ENCODE measurements at regions of chr1 and their contacts with region 1.

Region 1: GRCh38 chr1:1122078-1122811 is 6.4 kb upstream of the C1orf159 start:
- DNase-seq: peak; percentile 71 to 90 (median 82)
- ATAC-seq: peak; percentile 99
- H3K4me3 ChIP-seq: peak overlapping the region; percentile 48
- H3K4me3 Mint-ChIP-seq: no peak overlapping the region
- H3K27ac ChIP-seq: no peak overlapping the region
- H3K27ac Mint-ChIP-seq: no peak overlapping the region
- H3K4me1 ChIP-seq: peaks cover 20% of the 10 kb centered on the region
- H3K4me1 Mint-ChIP-seq: no peaks in the 10 kb centered on the region
- H3K27me3 ChIP-seq: peaks cover 0 to 2% of the 10 kb centered on the region in 2 experiments
- H3K27me3 Mint-ChIP-seq: no peaks in the 10 kb centered on the region
- CTCF ChIP-seq: peak; percentile 91

Region 2: GRCh38 chr1:1137256-1138045 is 15.2 kb after region 1 on chr1:
- CTCF ChIA-PET with region 1: no interaction called
- POLR2A ChIA-PET with region 1: no interaction called
- intact Hi-C with region 1: no loop called
- DNase-seq: peak; percentile 50 to 90 (median 62)
- ATAC-seq: peak; percentile 83
- H3K4me3 ChIP-seq: peak overlapping the region; percentile 30
- H3K4me3 Mint-ChIP-seq: peak overlapping the region; percentile 83
- H3K27ac ChIP-seq: peak overlapping the region in 1 of 2 donors; percentile 15
- H3K27ac Mint-ChIP-seq: peak overlapping the region; percentile 71
- H3K4me1 ChIP-seq: peaks cover 37% of the 10 kb centered on the region
- H3K4me1 Mint-ChIP-seq: peaks cover 13% of the 10 kb centered on the region
- H3K27me3 ChIP-seq: no peaks in the 10 kb centered on the region
- H3K27me3 Mint-ChIP-seq: no peaks in the 10 kb centered on the region
- CTCF ChIP-seq: no peak

Region 3: GRCh38 chr1:1157426-1157913 is 35.2 kb after region 1 on chr1:
- CTCF ChIA-PET with region 1: no interaction called
- POLR2A ChIA-PET with region 1: no interaction called
- intact Hi-C with region 1: loop called in 1 of 2 experiments (anchors 2 kb)
- DNase-seq: peak; percentile 35 to 80 (median 53)
- ATAC-seq: peak; percentile 75
- H3K4me3 ChIP-seq: peak overlapping the region; percentile 87
- H3K4me3 Mint-ChIP-seq: peak overlapping the region; percentile 83
- H3K27ac ChIP-seq: peak overlapping the region; percentile 77 to 82
- H3K27ac Mint-ChIP-seq: peak overlapping the region; percentile 75
- H3K4me1 ChIP-seq: peaks cover 19% of the 10 kb centered on the region
- H3K4me1 Mint-ChIP-seq: no peaks in the 10 kb centered on the region
- H3K27me3 ChIP-seq: no peaks in the 10 kb centered on the region
- H3K27me3 Mint-ChIP-seq: no peaks in the 10 kb centered on the region
- CTCF ChIP-seq: no peak

Region 4: DNA sequence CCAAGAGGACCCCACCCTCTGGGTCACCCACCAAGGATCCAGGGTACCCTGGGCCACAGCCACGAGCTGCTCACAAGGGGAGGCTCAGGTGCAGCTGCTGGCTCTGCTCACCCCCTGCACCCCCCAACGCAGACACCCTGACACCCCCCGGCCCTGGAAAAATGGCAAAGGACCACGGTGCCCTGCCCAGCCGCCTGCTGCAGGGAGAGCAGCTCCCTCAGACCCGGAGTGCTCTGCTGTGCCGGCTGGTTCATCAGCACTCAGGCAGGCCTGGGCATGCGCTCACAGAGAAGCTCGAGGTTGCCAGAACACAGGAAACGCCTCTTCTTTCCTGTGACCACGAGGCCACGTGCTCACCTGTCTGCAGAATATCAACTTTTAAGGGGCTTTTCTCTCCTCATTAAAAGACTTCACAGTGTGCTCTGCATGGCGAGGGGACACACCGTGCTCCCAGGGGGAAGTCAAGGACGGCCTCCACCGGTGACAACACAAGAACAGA is 128.6 kb after region 1 on chr1:
- CTCF ChIA-PET with region 1: interaction called, 9 read pairs
- POLR2A ChIA-PET with region 1: interaction called, 3 read pairs
- intact Hi-C with region 1: loop called (anchors 1 to 5 kb)
- DNase-seq: peak in 13 of 14 experiments; percentile 40 to 87 (median 66)
- ATAC-seq: no peak
- H3K4me3 ChIP-seq: peak overlapping the region; percentile 22
- H3K4me3 Mint-ChIP-seq: no peak overlapping the region
- H3K27ac ChIP-seq: peak overlapping the region; percentile 59 to 70
- H3K27ac Mint-ChIP-seq: no peak overlapping the region
- H3K4me1 ChIP-seq: peaks cover 24% of the 10 kb centered on the region
- H3K4me1 Mint-ChIP-seq: no peaks in the 10 kb centered on the region
- H3K27me3 ChIP-seq: peaks cover 4 to 11% of the 10 kb centered on the region in 2 experiments
- H3K27me3 Mint-ChIP-seq: no peaks in the 10 kb centered on the region
- CTCF ChIP-seq: no peak

Region 5: GRCh38 chr1:1291548-1292441 is 169.6 kb after region 1 on chr1:
- CTCF ChIA-PET with region 1: interaction called, 33 read pairs
- POLR2A ChIA-PET with region 1: no interaction called
- intact Hi-C with region 1: loop called (anchors 2 kb)
- DNase-seq: peak; percentile 43 to 84 (median 61)
- ATAC-seq: peak; percentile 81
- H3K4me3 ChIP-seq: no peak overlapping the region
- H3K4me3 Mint-ChIP-seq: no peak overlapping the region
- H3K27ac ChIP-seq: no peak overlapping the region
- H3K27ac Mint-ChIP-seq: no peak overlapping the region
- H3K4me1 ChIP-seq: peaks cover 14% of the 10 kb centered on the region
- H3K4me1 Mint-ChIP-seq: no peaks in the 10 kb centered on the region
- H3K27me3 ChIP-seq: no peaks in the 10 kb centered on the region
- H3K27me3 Mint-ChIP-seq: no peaks in the 10 kb centered on the region
- CTCF ChIP-seq: peak; percentile 42

Region 6: DNA sequence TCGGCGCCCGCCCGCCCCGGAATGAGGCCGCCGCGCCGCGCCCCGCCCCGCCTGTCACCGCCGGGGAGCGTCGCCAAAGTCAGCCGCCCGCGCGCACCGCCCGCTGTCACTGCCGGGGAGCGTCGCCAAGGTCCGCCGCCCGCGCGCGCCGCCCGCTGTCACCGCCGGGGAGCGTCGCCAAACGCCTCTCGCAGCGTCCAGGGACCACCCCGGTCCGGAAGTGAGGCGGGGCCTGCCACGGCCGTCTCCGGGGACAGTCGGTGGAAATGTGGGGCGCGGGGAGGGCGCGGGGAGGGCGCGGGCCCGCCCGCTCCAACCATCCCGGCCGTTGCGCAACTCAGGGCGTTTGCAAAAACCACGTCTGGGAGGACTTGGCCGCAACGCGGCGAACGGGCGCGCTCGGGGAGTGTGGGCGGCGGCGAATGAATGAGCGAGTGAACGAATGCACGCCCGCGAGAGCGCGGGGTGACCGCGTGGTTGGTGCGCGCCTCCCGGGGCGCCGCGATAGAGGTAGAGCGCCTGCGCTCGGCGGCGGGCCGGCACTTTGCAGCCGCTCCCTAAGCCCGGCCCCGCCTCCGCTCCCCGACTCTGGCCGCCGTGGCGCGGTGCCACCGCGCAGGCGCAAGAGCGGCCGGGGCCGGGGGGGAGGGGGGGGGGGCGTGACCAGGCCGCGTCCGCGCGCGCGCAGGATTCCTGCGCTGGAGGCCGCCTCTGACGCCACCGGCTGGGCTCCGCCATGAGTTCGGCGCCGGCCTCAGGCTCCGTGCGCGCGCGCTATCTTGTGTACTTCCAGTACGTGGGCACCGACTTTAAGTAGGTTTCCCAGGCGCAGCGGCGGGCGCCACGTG is 185.9 kb after region 1 on chr1 and contains the starts of genes ACAP3 and PUSL1:
- CTCF ChIA-PET with region 1: interaction called, 4 read pairs
- POLR2A ChIA-PET with region 1: no interaction called
- intact Hi-C with region 1: loop called (anchors 5 kb)
- DNase-seq: peak; percentile 77 to 96 (median 86)
- ATAC-seq: peak; percentile 74
- H3K4me3 ChIP-seq: peak within 1 kb of the TSS; percentile 70
- H3K4me3 Mint-ChIP-seq: peak within 1 kb of the TSS; percentile 93
- H3K27ac ChIP-seq: peak within 1 kb of the TSS; percentile 76 to 88
- H3K27ac Mint-ChIP-seq: peak within 1 kb of the TSS; percentile 87
- H3K4me1 ChIP-seq: peaks cover 46% of the 10 kb centered on the region
- H3K4me1 Mint-ChIP-seq: peaks cover 25% of the 10 kb centered on the region
- H3K27me3 ChIP-seq: no peaks in the 10 kb centered on the region
- H3K27me3 Mint-ChIP-seq: no peaks in the 10 kb centered on the region
- CTCF ChIP-seq: no peak
- total RNA-seq, gene ACAP3: 45.3 to 46.4 TPM
- total RNA-seq, gene PUSL1: 18.1 to 19.2 TPM

Region 7: DNA sequence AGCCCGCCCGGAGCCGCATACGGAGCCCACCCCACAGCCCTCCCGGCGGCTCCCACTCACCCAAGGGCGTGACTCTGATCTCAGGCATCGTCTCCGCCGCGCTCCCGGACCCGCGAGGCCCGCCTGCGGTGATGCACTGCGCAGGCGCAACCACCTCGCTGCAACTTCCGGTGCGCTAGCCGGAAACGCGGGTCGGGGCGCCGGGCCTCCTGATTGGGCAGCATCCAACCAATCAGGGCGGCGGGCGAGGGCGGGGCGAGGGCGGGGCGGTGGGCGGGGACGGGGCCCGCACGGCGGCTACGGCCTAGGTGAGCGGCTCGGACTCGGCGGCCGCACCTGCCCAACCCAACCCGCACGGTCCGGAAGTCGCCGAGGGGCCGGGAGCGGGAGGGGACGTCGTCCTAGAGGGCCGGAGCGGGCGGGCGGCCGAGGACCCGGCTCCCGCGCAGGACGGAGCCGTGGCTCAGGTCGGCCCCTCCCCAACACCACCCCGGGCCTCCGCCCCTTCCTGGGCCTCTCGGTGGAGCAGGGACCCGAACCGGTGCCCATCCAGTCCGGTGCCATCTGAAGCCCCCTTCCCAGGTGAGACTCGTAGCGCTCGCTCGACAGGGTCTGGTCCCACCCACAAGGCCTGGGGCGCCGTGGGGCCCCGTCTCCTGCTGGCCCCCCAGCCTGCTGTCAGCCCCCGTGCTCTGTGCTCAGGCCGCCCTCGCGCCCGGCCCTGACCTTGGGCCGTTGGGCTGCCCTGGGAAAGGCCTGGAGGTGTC is 202.5 kb after region 1 on chr1 and contains the starts of genes CPTP and INTS11:
- CTCF ChIA-PET with region 1: no interaction called
- POLR2A ChIA-PET with region 1: no interaction called
- intact Hi-C with region 1: no loop called
- DNase-seq: peak; percentile 93 to 98 (median 96)
- ATAC-seq: peak; percentile 84
- H3K4me3 ChIP-seq: peak within 1 kb of the TSS; percentile 69
- H3K4me3 Mint-ChIP-seq: peak within 1 kb of the TSS; percentile 93
- H3K27ac ChIP-seq: peak within 1 kb of the TSS; percentile 61 to 70
- H3K27ac Mint-ChIP-seq: peak within 1 kb of the TSS; percentile 81
- H3K4me1 ChIP-seq: peaks cover 56% of the 10 kb centered on the region
- H3K4me1 Mint-ChIP-seq: peaks cover 28% of the 10 kb centered on the region
- H3K27me3 ChIP-seq: no peaks in the 10 kb centered on the region
- H3K27me3 Mint-ChIP-seq: no peaks in the 10 kb centered on the region
- CTCF ChIP-seq: no peak
- total RNA-seq, gene CPTP: 11.6 to 12.9 TPM
- total RNA-seq, gene INTS11: 130 to 137 TPM